Activated CD8-positive, alpha-beta memory T cell treated with anti-CD3 and anti-CD28 coated beads, Interleukin-2, amount 10 ng/mL, durations not matched to agents 7 days and 5 days (primary cell): ENCODE measurements at regions of chr1 and their contacts with region 1.

Region 1: GRCh38 chr1:113868387-113869083 is 3.0 kb downstream of the PTPN22 start:
- DNase-seq: no peak
- ATAC-seq: peak; percentile 18
- H3K4me3 Mint-ChIP-seq: peak overlapping the region; percentile 86
- H3K27ac Mint-ChIP-seq: peak overlapping the region; percentile 99
- H3K4me1 Mint-ChIP-seq: peaks cover 57% of the 10 kb centered on the region
- H3K27me3 Mint-ChIP-seq: no peaks in the 10 kb centered on the region

Region 2: GRCh38 chr1:113835642-113836307 is 32.8 kb before region 1 on chr1:
- CTCF ChIA-PET with region 1: interaction called, 24 read pairs
- DNase-seq: no peak
- ATAC-seq: no peak
- H3K4me3 Mint-ChIP-seq: no peak overlapping the region
- H3K27ac Mint-ChIP-seq: peak overlapping the region; percentile 12
- H3K4me1 Mint-ChIP-seq: peaks cover 10% of the 10 kb centered on the region
- H3K27me3 Mint-ChIP-seq: no peaks in the 10 kb centered on the region

Region 3: GRCh38 chr1:113881661-113882060 is 13.1 kb after region 1 on chr1:
- CTCF ChIA-PET with region 1: interaction called, 36 read pairs
- DNase-seq: no peak
- ATAC-seq: no peak
- H3K4me3 Mint-ChIP-seq: no peak overlapping the region
- H3K27ac Mint-ChIP-seq: peak overlapping the region; percentile 14
- H3K4me1 Mint-ChIP-seq: peaks cover 42% of the 10 kb centered on the region
- H3K27me3 Mint-ChIP-seq: no peaks in the 10 kb centered on the region

Region 4: DNA sequence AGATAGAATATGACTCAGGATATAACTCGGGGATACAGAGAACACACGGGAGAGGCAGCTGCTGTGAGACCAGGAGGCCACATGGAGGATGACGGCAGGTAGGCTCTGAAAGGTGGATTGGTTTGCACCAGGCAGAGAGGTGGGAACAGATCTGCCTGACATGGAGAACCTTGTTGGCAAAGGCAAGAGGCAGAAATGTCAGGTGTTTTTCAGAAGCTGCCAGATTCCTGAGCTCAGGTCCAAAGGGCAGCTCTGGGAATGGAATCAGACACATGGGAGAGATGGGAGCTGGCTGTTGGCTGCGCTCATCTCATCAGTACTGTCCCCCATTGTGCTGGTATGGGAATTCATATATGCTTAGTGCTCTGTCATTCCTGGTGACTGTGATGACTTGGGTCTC is 266.0 kb after region 1 on chr1:
- CTCF ChIA-PET with region 1: no interaction called
- DNase-seq: no peak
- ATAC-seq: no peak
- H3K4me3 Mint-ChIP-seq: no peak overlapping the region
- H3K27ac Mint-ChIP-seq: no peak overlapping the region
- H3K4me1 Mint-ChIP-seq: no peaks in the 10 kb centered on the region
- H3K27me3 Mint-ChIP-seq: peaks cover 10% of the 10 kb centered on the region